ENCODE measurements at regions of chr20 and their contacts with region 1.

Region 1: GRCh38 chr20:33731693-33732165 is at the start of gene ZNF341:
- DNase-seq: peak in 4 of 5 donors; percentile 88 to 91 (median 90)
- H3K4me3 ChIP-seq: peak within 1 kb of the TSS; percentile 64 to 69
- H3K4me3 Mint-ChIP-seq: peak within 1 kb of the TSS; percentile 89 to 94 (median 93)
- H3K27ac ChIP-seq: peak within 1 kb of the TSS; percentile 64
- H3K27ac Mint-ChIP-seq: peak within 1 kb of the TSS; percentile 92 to 98 (median 96)
- H3K4me1 ChIP-seq: peaks cover 21% of the 10 kb centered on the region
- H3K4me1 Mint-ChIP-seq: peaks cover 10 to 25% (median 19%) of the 10 kb centered on the region in 4 donors
- H3K27me3 ChIP-seq: no peaks in the 10 kb centered on the region
- H3K27me3 Mint-ChIP-seq: no peaks in the 10 kb centered on the region
- total RNA-seq, gene ZNF341: 4.8 to 5.0 TPM

Region 2: GRCh38 chr20:33401184-33401920 is 330.4 kb before region 1 on chr20 and contains the start of gene CDK5RAP1:
- CTCF ChIA-PET with region 1: no interaction called
- POLR2A ChIA-PET with region 1: no interaction called
- intact Hi-C with region 1: loop called (anchors 1 kb)
- DNase-seq: peak; percentile 82 to 88 (median 83)
- H3K4me3 ChIP-seq: peak within 1 kb of the TSS; percentile 100
- H3K4me3 Mint-ChIP-seq: peak within 1 kb of the TSS; percentile 93 to 98 (median 98)
- H3K27ac ChIP-seq: peak within 1 kb of the TSS; percentile 74
- H3K27ac Mint-ChIP-seq: peak within 1 kb of the TSS; percentile 6 to 95 (median 94)
- H3K4me1 ChIP-seq: peaks cover 52% of the 10 kb centered on the region
- H3K4me1 Mint-ChIP-seq: peaks cover 24 to 66% (median 46%) of the 10 kb centered on the region in 4 donors
- H3K27me3 ChIP-seq: no peaks in the 10 kb centered on the region
- H3K27me3 Mint-ChIP-seq: no peaks in the 10 kb centered on the region
- total RNA-seq, gene CDK5RAP1: 50.9 to 51.8 TPM

Region 3: GRCh38 chr20:33460711-33461110 is 271.0 kb before region 1 on chr20:
- CTCF ChIA-PET with region 1: interaction called, 4 read pairs
- POLR2A ChIA-PET with region 1: interaction called, 5 read pairs
- intact Hi-C with region 1: loop called (anchors 1 kb)
- DNase-seq: no peak
- H3K4me3 ChIP-seq: no peak overlapping the region
- H3K4me3 Mint-ChIP-seq: no peak overlapping the region
- H3K27ac ChIP-seq: no peak overlapping the region
- H3K27ac Mint-ChIP-seq: no peak overlapping the region
- H3K4me1 ChIP-seq: no peaks in the 10 kb centered on the region
- H3K4me1 Mint-ChIP-seq: peaks cover 0 to 2% (median 0%) of the 10 kb centered on the region in 4 donors
- H3K27me3 ChIP-seq: no peaks in the 10 kb centered on the region
- H3K27me3 Mint-ChIP-seq: no peaks in the 10 kb centered on the region

Region 4: DNA sequence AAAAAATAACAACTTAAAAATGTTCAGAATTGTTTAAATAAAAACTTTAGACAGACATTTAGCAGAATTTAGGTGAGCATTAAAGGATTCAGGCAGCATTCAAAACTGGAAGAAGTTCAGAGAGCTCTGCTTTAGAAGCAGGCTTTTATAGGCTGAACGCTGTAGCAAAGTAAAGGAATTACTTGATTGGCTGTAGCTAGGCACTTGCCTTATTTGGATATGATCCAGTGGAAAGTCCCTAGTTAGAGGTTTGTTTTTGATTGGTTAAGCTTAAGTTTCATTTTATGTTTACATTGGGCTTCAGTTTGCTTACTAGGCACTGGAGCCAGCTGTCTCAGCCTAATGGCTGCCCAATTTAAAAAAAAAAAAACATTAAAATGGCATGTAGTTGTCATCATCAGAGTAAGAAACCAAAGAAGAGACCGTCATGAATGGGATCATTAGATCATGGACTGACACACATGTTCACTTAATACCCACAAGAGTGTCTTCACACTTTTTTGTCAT is 176.8 kb before region 1 on chr20:
- CTCF ChIA-PET with region 1: no interaction called
- POLR2A ChIA-PET with region 1: no interaction called
- intact Hi-C with region 1: loop called (anchors 1 kb)
- DNase-seq: peak; percentile 77 to 94 (median 91)
- H3K4me3 ChIP-seq: no peak overlapping the region
- H3K4me3 Mint-ChIP-seq: peak overlapping the region; percentile 57 to 82 (median 71)
- H3K27ac ChIP-seq: peak overlapping the region; percentile 76
- H3K27ac Mint-ChIP-seq: peak overlapping the region; percentile 91 to 99 (median 97)
- H3K4me1 ChIP-seq: peaks cover 20% of the 10 kb centered on the region
- H3K4me1 Mint-ChIP-seq: peaks cover 14 to 41% (median 24%) of the 10 kb centered on the region in 4 donors
- H3K27me3 ChIP-seq: no peaks in the 10 kb centered on the region
- H3K27me3 Mint-ChIP-seq: no peaks in the 10 kb centered on the region

Region 5: DNA sequence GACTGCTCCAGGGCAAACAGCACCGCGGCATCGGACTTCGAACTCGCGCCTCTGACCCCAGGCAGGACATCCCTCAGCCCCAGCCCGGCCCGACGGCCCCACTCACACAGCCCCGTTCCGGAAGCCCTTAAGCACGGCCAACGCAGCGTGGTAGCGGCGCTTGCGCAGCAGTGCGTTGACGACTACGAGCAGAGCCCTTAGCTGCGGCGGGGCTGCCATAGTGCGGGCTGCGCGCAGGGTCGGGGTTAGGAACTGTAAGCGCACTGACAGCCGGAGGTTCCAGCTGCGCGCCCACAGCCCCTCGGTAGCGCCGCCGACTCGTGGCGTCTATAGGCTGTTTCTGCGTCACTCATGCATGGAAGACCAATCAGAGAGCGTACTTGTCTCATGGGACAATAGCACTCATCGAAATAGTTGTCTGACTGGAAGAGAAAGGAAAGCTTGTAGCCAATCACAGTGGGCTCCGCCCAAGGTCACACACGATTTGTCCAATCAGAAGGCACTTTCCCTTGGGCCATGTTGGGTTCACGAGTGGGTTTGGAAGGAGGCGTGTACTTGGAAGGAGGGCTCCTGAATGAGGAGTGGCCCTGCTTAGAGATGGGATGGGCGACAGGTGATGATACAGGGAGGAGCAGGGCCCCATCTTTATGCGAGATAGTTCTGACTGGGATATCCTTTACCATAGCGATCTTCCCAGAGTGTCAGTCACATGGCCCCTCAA is 11.6 kb before region 1 on chr20 and contains the start of gene PXMP4:
- CTCF ChIA-PET with region 1: interaction called, 9 read pairs
- POLR2A ChIA-PET with region 1: interaction called, 55 read pairs
- intact Hi-C with region 1: loop called (anchors 1 kb)
- DNase-seq: peak; percentile 90 to 96 (median 94)
- H3K4me3 ChIP-seq: peak within 1 kb of the TSS; percentile 25 to 88
- H3K4me3 Mint-ChIP-seq: peak within 1 kb of the TSS; percentile 86 to 97 (median 90)
- H3K27ac ChIP-seq: peak within 1 kb of the TSS; percentile 67
- H3K27ac Mint-ChIP-seq: peak within 1 kb of the TSS; percentile 81 to 98 (median 92)
- H3K4me1 ChIP-seq: peaks cover 15% of the 10 kb centered on the region
- H3K4me1 Mint-ChIP-seq: peaks cover 18 to 40% (median 23%) of the 10 kb centered on the region in 4 donors
- H3K27me3 ChIP-seq: no peaks in the 10 kb centered on the region
- H3K27me3 Mint-ChIP-seq: no peaks in the 10 kb centered on the region
- total RNA-seq, gene PXMP4: 15.7 to 16.3 TPM